ENCODE measurements at regions of chr5 and their contacts with region 1.

Region 1: DNA sequence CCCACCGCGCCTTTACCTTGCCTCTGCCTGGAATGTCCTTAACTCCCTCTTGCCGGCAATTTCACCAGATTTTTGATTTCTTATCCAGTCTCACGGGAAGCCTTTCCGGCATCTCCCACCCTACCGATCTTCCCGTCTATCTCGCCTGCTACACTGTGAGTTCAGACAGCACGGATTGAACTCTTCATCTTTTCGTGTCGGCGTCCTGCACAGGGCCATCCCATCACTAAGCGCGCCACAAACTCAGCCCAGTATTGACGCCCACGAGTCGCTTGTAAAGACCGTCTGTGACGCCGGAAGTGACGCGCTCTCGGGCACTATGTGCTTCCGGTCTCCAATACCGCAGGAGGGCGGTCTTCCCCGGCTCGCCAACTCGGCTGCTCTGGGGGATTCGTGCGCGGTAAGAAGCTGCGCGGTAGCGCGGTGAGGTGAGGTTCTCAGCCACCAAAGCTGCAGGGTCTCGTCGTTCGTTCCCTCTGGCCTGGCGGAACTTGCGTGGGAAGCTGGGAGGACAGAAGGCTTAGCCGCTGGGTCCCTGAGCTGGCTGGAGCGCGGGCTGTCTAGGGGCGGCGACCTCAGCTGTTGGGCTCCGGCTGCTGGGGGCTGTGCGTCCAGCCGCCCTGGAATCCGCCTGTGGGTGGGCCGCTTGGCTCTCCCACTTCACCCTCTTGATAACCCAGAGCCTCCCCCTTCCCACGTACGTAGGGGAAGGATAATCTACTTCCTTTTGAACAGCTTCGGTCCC is at the start of gene ZCCHC9:
- DNase-seq: peak; percentile 86
- ATAC-seq: peak; percentile 91
- H3K4me3 Mint-ChIP-seq: peak within 1 kb of the TSS; percentile 94
- H3K27ac Mint-ChIP-seq: peak within 1 kb of the TSS; percentile 93
- H3K4me1 Mint-ChIP-seq: peaks cover 32% of the 10 kb centered on the region
- H3K27me3 Mint-ChIP-seq: no peaks in the 10 kb centered on the region
- CTCF ChIP-seq: no peak
- total RNA-seq, gene ZCCHC9: 23.7 and 24.0 TPM in 2 replicates

Region 2: DNA sequence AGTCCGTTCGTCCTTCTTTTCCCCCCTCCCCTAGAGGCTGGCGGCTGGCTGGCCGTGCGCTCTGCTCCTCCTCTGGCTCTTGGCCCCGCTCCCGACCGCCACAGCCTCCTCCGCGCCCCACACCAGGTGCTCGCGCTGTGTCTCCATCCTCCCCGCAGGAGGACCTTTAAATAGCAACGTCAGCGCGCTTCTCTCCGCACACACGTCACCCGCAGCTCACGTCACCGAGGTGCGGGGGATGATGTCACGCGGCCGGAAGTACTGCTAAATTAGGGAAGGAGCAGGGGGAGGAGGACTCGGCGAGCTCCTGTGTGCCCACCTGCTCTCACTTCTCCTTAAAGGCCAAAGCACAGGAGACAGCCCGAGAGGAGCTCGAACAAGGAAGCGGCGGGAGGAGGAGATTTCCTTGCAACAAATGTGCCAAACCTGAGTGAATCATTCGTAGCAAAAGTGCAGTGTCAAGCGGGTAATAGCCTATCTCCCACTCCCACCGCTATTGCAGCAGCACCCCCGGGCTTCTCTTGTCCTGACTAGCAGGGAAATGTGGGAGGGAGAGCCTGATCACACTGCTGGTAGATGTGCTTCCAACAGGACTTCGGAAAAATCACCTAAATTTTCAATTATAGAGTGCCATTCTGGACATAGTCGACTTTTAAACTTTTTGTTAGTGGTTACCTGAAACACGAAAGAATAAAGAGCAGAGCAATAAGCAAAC is 1786.9 kb before region 1 on chr5:
- CTCF ChIA-PET with region 1: no interaction called
- POLR2A ChIA-PET with region 1: no interaction called
- intact Hi-C with region 1: loop called (anchors 1 kb)
- DNase-seq: peak; percentile 85
- ATAC-seq: peak; percentile 77
- H3K4me3 Mint-ChIP-seq: peak overlapping the region; percentile 91
- H3K27ac Mint-ChIP-seq: peak overlapping the region; percentile 89
- H3K4me1 Mint-ChIP-seq: peaks cover 28% of the 10 kb centered on the region
- H3K27me3 Mint-ChIP-seq: peaks cover 24% of the 10 kb centered on the region
- CTCF ChIP-seq: no peak

Region 3: GRCh38 chr5:80093796-80094195 is 1207.6 kb before region 1 on chr5:
- CTCF ChIA-PET with region 1: no interaction called
- POLR2A ChIA-PET with region 1: no interaction called
- intact Hi-C with region 1: loop called (anchors 2 kb)
- DNase-seq: no peak
- ATAC-seq: no peak
- H3K4me3 Mint-ChIP-seq: no peak overlapping the region
- H3K27ac Mint-ChIP-seq: no peak overlapping the region
- H3K4me1 Mint-ChIP-seq: no peaks in the 10 kb centered on the region
- H3K27me3 Mint-ChIP-seq: no peaks in the 10 kb centered on the region
- CTCF ChIP-seq: no peak

Region 4: DNA sequence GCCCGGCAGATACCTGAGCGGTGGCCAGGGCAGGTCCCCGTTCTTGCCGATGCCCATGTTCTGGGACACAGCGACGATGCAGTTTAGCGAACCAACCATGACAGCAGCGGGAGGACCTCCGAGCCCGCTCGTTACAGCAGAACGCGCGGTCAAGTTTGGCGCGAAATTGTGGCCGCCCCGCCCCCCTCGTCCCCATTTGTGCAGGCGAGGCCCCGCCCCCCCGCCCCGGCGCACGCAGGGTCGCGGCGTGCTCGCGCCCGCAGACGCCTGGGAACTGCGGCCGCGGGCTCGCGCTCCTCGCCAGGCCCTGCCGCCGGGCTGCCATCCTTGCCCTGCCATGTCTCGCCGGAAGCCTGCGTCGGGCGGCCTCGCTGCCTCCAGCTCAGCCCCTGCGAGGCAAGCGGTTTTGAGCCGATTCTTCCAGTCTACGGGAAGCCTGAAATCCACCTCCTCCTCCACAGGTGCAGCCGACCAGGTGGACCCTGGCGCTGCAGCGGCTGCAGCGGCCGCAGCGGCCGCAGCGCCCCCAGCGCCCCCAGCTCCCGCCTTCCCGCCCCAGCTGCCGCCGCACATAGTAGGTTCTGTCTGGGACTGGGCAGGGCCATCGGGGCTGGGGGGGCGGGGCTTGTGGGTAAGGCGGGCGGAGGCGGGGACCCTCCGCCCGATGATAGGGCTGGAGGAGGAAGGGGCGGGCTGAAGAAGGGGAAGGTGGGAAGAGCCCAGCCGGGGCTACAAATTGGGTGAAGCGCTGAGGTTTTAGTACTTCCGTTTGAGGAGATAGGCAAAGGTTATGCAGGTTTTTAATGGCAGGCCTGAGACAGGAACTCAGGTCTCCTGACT is 646.8 kb before region 1 on chr5 and contains the starts of genes DHFR and MSH3:
- CTCF ChIA-PET with region 1: no interaction called
- POLR2A ChIA-PET with region 1: interaction called, 4 read pairs
- intact Hi-C with region 1: loop called (anchors 2 kb)
- DNase-seq: peak; percentile 79
- ATAC-seq: peak; percentile 73
- H3K4me3 Mint-ChIP-seq: peak within 1 kb of the TSS; percentile 97
- H3K27ac Mint-ChIP-seq: peak within 1 kb of the TSS; percentile 99
- H3K4me1 Mint-ChIP-seq: peaks cover 26% of the 10 kb centered on the region
- H3K27me3 Mint-ChIP-seq: no peaks in the 10 kb centered on the region
- CTCF ChIP-seq: no peak
- total RNA-seq, gene DHFR: 11.1 and 12.7 TPM in 2 replicates
- total RNA-seq, gene MSH3: 22.9 and 24.0 TPM in 2 replicates

Region 5: GRCh38 chr5:81450940-81451339 is 149.5 kb after region 1 on chr5:
- CTCF ChIA-PET with region 1: no interaction called
- POLR2A ChIA-PET with region 1: no interaction called
- intact Hi-C with region 1: no loop called
- DNase-seq: no peak
- ATAC-seq: no peak
- H3K4me3 Mint-ChIP-seq: no peak overlapping the region
- H3K27ac Mint-ChIP-seq: no peak overlapping the region
- H3K4me1 Mint-ChIP-seq: no peaks in the 10 kb centered on the region
- H3K27me3 Mint-ChIP-seq: no peaks in the 10 kb centered on the region
- CTCF ChIP-seq: no peak

Region 6: DNA sequence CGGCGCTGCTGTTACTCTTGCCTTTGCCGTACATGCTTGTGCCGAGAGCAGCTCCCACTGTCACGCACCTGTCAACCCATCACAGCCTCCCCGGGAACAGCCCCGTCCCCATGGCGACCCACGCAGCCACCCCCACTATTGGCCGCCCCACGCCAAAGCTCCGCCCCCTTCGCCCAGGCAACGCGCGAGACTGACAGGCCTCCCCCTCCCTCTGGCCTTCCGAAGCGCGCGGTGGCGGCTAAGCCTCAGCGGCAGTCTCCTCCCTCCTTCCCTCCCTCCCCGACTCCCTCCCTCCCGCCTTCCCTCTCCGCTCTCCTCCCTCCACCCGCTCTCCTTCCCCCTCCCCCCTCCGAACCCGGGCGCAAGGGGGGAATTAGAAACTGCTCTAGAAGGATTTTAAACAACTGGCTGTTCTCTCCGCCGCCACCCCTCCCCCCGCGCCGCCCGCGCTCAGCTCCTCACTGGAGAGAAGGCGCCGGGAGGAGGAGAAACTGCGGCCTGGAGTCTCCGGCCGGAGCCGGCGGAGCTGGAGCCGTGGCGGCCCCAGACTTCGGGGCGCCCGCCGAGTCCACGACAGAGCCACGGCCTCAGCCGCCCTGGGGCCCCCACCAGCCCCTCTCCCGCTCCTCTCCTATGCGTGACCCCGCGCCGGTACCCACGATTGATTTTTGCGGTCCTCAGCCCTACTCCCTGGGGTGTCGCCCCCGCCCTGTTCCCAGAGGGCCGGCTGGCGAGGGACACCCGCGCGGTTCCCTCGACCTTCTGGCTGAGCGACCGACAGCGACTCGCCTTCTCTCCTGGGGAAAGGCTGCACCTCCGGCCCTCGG is 449.8 kb after region 1 on chr5 and contains the start of gene SSBP2:
- CTCF ChIA-PET with region 1: no interaction called
- POLR2A ChIA-PET with region 1: interaction called, 5 read pairs
- intact Hi-C with region 1: loop called (anchors 1 kb)
- DNase-seq: peak; percentile 99
- ATAC-seq: peak; percentile 84
- H3K4me3 Mint-ChIP-seq: peak within 1 kb of the TSS; percentile 95
- H3K27ac Mint-ChIP-seq: peak within 1 kb of the TSS; percentile 97
- H3K4me1 Mint-ChIP-seq: peaks cover 30% of the 10 kb centered on the region
- H3K27me3 Mint-ChIP-seq: no peaks in the 10 kb centered on the region
- CTCF ChIP-seq: no peak
- total RNA-seq, gene SSBP2: 26.2 and 26.4 TPM in 2 replicates

Region 7: DNA sequence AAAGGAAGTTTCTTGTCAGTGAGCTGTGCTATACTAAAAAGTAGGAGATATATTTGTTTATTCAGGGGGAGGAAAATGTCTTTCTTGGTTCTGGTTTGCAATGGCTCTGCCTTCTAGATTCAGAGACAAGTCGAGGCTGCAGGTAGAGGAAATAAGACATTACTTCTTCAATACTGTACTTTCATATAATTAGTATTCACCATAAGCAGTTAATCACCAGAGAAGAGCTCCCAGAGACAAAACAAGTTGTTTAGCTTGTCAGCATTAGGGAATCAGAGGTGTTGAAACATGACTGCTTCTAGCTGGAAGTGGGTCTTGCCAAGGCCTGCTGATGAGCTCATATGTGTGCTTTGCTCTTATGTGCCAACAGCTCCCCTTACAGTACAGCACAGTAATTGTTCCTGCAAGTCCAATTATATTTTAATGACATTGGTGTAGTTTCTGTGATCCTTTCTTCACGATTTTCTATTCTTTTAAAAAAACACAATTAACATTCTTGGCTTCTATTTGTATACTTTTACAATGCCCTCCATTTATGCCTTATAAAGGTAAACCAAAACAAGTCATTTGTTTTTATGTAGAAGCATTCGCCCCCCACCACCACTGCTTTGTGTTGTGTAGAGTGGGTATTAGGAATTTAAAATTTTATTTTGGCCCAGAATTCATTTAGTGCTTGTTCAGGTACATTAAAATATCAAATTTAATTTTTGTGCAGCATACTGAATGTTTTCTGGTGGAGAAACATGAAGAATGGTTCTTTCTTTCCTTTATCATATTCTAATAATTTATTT is 864.5 kb after region 1 on chr5:
- CTCF ChIA-PET with region 1: no interaction called
- POLR2A ChIA-PET with region 1: no interaction called
- intact Hi-C with region 1: loop called (anchors 1 kb)
- DNase-seq: no peak
- ATAC-seq: peak; percentile 84
- H3K4me3 Mint-ChIP-seq: no peak overlapping the region
- H3K27ac Mint-ChIP-seq: no peak overlapping the region
- H3K4me1 Mint-ChIP-seq: peaks cover 3% of the 10 kb centered on the region
- H3K27me3 Mint-ChIP-seq: no peaks in the 10 kb centered on the region
- CTCF ChIP-seq: no peak

Region 8: DNA sequence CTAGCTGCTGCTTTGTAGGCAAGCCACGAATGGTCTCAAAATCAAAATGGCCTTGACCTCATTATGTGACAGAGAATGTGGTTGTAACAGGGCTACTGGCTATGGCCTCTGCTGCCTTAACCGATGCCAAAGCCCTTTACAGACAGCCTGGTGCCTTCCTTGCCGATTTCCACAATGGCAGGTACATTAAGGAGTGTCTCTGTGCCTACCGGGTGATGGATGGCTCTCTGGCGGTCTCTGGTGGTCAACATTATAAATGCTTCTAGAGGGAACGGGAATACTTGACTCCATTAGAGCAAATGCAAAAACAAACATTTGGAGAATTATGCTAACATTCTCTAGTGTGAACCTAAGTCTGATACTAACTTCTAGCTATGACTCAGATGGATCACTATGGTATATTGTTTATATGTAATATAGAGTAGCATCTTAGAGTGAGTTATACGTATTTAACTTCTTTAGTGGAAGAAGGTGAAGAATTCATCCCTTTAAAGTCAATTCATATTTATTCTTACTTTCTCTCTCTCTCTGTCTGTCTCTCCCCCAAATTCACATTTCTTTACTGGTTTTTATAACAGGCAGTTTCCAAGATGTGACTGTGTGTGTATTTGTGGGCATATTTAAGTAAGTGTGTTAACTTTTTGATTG is 924.2 kb after region 1 on chr5:
- CTCF ChIA-PET with region 1: no interaction called
- POLR2A ChIA-PET with region 1: no interaction called
- intact Hi-C with region 1: loop called (anchors 1 kb)
- DNase-seq: peak; percentile 33
- ATAC-seq: peak; percentile 89
- H3K4me3 Mint-ChIP-seq: no peak overlapping the region
- H3K27ac Mint-ChIP-seq: no peak overlapping the region
- H3K4me1 Mint-ChIP-seq: peaks cover 3% of the 10 kb centered on the region
- H3K27me3 Mint-ChIP-seq: no peaks in the 10 kb centered on the region
- CTCF ChIP-seq: peak; percentile 60

Measured in activated B cell treated with CpG ODN at 0.5 μM for 24 hours (primary cell).